Dendritic cell treated with granulocyte-macrophage colony-stimulating factor and Interleukin-4, amounts not matched to agents 40 ng/mL and 50 ng/mL, for 4 days (primary cell): ENCODE measurements at regions of chr11 and their contacts with region 1.

Region 1: DNA sequence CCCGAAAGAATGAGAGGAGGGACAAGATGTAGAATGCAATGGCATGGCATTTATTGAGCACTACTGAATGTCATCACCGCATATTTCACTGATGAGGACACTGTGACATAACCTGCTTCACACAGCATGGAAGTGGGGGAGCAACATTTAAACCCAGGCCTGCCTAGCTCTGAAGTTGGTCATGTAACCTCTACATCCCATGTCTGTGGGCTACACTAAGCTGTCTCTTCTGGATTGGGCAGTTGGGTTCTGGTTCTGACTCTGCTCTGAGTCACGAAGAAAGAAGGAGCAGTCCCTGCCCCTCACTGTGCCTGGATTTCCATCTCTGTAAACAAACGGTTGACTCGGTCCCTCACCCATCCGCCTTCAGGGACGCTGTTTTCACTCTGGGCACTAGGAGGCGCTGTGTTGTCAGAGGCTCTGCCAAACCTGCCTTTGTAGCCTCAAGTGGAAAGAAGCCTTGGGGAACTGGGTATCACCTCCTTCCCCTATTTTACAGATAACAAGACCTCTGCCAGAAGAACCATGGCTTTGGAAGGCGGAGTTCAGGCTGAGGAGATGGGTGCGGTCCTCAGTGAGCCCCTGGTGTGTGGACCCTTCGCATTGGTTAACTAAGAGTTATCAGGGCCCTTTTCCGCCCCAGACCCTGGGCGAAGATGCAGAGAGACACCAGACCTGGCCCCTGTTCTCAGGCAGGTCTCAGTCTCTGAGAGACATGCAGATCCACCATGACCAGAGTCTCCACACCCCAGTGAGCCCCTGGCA is 12.7 kb upstream of the ARHGEF17 start:
- H3K4me3 Mint-ChIP-seq: no peak overlapping the region
- H3K27ac Mint-ChIP-seq: no peak overlapping the region
- H3K4me1 Mint-ChIP-seq: peaks cover 73% of the 10 kb centered on the region
- H3K27me3 Mint-ChIP-seq: peaks cover 3% of the 10 kb centered on the region

Region 2: DNA sequence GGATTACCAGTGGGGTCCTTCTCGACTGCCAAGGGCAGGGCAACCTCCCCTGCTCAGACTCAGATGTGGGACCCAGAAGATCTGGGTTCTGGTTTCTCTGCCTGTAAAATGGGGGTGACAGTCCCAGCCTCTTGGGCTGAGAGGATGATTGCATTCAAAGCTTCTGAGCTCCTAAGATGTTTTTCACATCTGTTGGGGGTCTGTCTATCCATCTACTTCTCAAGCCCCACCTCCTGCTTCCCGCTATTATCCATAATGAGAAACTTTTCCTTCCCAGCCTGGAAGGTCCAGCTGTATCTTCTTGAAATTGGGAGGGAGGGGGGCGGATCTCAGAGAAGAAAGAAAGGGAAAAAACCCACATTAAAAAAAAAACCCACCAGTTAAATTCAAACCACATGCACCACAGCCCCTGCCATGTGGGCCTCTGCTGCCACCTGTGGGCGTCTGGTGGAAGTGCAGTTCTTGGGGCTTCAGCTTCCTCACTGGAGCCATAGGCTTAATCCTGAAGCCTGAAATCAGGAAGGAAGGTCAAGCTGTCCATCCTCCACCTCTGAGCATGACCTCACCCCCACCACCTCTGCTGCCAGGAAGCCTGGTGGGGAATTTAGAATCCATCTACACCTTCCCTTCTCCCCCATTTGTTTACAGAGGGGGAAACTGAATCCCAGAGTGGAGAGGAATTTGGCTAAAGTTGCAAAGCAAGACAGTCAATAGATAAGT is 40.0 kb after region 1 on chr11:
- intact Hi-C with region 1: loop called (anchors 5 kb)
- H3K4me3 Mint-ChIP-seq: no peak overlapping the region
- H3K27ac Mint-ChIP-seq: no peak overlapping the region
- H3K4me1 Mint-ChIP-seq: peaks cover 15% of the 10 kb centered on the region
- H3K27me3 Mint-ChIP-seq: peaks cover 6% of the 10 kb centered on the region